ENCODE measurements at regions of chr1 and their contacts with region 1.

Region 1: DNA sequence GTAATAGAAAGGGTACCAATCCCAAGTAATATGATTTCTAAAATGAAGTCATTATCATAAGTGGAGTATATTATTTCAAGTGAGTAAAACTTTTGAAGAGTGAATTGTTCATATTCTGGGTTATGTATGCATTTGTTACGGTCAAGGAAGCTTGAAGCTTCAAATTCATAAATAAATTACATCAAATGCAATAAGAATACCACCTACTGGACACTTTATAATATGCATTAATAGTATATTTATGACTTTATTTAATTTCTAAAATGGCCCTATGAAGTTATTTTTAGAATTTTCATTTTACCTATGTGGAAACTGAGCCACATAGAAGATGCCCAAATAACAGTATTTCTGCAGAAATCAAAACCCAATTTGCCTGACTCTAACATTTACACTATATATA is 260.6 kb downstream of the SMYD3 start:
- DNase-seq: no peak
- CTCF ChIP-seq: no peak

Region 2: DNA sequence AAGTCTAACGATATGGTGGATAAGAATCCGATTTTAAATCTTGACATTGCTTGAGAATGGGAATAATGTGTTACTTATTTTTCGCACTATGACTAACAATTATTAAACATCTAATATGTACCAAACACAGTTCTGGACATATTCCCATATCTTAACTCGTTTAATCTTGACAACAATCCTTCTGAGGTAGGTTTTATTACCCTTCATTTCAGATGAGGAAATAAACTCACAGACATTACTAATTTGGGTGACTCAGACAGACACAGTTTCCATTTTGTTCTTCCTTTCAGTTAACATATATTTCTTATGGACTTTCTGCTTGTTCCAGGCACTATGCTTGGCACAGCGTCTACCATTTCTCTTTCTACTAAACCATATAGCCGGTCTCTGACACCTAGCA is 15.9 kb after region 1 on chr1:
- CTCF ChIA-PET with region 1: interaction called, 10 read pairs
- POLR2A ChIA-PET with region 1: no interaction called
- DNase-seq: no peak
- CTCF ChIP-seq: no peak

Region 3: GRCh38 chr1:246295968-246296367 is 49.5 kb after region 1 on chr1:
- CTCF ChIA-PET with region 1: no interaction called
- POLR2A ChIA-PET with region 1: no interaction called
- DNase-seq: no peak
- CTCF ChIP-seq: no peak

Measured in GM10248 (cell line).